ENCODE measurements at regions of chr3 and their contacts with region 1.

Region 1: DNA sequence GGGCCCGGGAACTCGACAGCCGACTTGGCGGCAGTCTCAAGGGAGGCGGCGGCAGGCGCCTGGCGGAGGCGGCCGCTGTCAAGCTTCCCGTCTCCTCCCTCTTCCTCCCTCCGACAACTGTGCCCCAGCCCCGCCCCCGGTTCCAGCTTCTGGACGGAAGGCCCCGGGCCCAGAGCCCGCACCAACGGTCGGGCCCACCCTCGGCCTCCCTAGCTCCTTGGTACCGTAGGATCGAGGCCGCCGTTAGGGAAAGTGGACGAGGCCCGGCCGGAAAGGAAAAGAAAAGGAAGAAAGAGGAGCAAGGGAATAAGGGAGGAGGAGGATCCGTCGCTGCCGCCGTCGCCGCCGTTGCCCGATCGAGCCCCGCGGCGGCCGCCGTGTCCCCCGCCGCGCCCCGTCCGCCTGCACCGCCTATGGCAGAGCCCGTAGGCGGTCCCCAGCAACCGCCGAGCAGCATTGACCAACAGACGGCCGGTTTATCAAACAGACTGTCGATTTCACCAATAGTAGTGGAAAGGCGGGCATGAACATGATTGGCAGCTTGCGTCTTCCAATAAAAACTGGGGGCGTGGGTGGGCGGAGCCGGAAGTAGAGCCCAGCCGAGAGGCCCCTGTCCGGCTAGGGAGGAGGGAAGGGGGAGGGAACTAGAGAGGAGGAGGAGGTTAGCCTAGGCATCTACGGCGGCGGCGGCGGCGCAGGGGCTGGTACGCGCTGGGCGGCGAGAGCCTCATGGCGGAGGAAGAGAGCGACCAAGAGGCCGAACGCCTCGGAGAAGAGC is at the starts of genes CGGBP1 and ZNF654:
- DNase-seq: peak; percentile 100
- H3K4me3 Mint-ChIP-seq: peak within 1 kb of the TSS; percentile 100
- H3K27ac Mint-ChIP-seq: peak within 1 kb of the TSS; percentile 97
- H3K4me1 Mint-ChIP-seq: peaks cover 49% of the 10 kb centered on the region
- H3K27me3 Mint-ChIP-seq: no peaks in the 10 kb centered on the region
- total RNA-seq, gene CGGBP1: 85.9 and 87.2 TPM in 2 replicates
- total RNA-seq, gene ZNF654: 18.1 and 18.7 TPM in 2 replicates

Region 2: GRCh38 chr3:87227104-87227834 is 831.5 kb before region 1 on chr3 and contains the start of gene CHMP2B:
- intact Hi-C with region 1: loop called (anchors 2 kb)
- DNase-seq: peak; percentile 97
- H3K4me3 Mint-ChIP-seq: peak within 1 kb of the TSS; percentile 100
- H3K27ac Mint-ChIP-seq: peak within 1 kb of the TSS; percentile 98
- H3K4me1 Mint-ChIP-seq: peaks cover 33% of the 10 kb centered on the region
- H3K27me3 Mint-ChIP-seq: peaks cover 25% of the 10 kb centered on the region
- total RNA-seq, gene CHMP2B: 25.3 and 27.2 TPM in 2 replicates

Region 3: DNA sequence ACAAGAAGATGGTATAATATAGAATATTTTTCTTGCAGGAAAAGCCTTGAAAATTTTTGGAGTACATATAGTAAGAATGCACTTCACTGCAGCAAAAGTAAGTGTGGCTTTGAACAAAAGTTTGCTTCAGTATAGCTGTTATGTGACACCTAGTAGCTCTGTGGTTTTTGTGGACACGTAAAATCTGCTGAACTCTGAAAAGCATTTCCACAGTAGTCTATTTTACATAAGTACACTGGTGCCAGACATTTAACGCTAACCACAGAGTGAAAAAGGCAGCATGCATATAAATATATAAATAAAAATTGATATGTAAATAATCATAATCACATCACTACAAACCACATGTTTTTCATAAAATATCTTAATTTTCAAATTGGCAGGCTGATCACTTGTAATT is 39.8 kb before region 1 on chr3:
- intact Hi-C with region 1: loop called (anchors 5 kb)
- DNase-seq: peak; percentile 80
- H3K4me3 Mint-ChIP-seq: no peak overlapping the region
- H3K27ac Mint-ChIP-seq: no peak overlapping the region
- H3K4me1 Mint-ChIP-seq: peaks cover 19% of the 10 kb centered on the region
- H3K27me3 Mint-ChIP-seq: peaks cover 7% of the 10 kb centered on the region

Region 4: DNA sequence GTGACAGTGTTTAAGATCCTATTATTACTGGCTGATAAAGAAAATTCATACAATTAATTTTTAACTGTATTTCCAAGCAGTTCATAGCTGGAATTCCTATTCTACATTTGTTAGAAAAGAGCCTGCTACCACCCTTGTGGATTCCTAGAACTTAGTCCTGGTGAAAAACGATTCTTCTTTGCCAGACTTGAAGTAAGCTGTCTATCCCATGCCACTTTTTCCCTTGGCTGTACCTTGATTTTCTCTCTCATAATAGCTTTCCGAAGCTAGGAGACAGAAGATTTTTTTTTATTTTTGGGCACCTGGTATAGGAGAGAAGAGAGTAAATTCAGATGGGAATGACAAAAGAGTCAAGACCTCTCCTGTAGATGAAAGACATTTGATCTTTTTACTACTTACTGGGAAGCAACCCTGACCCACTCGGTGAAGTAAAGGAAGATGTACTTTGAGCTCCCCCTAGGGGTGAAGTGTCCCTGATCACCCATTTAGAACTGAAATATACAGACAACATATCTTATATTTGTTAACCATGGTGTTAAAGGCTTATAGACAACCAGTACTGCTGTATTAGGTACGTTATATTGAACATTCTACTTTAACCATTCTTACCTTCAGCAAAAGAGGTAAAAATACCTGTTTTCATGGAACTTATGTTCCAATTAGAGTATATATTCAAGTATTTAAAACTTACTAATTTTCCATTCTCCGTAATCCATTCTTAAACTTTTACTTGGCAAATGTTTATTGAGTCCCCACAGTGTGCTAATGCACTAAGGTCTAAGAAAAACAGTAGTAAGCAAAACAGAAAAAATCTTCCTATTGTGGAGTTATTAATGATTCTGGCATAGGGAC is 54.8 kb after region 1 on chr3:
- intact Hi-C with region 1: loop called (anchors 1 kb)
- DNase-seq: peak; percentile 88
- H3K4me3 Mint-ChIP-seq: no peak overlapping the region
- H3K27ac Mint-ChIP-seq: no peak overlapping the region
- H3K4me1 Mint-ChIP-seq: peaks cover 19% of the 10 kb centered on the region
- H3K27me3 Mint-ChIP-seq: no peaks in the 10 kb centered on the region

Region 5: GRCh38 chr3:88180398-88180999 is 121.7 kb after region 1 on chr3:
- intact Hi-C with region 1: loop called (anchors 1 kb)
- DNase-seq: peak; percentile 80
- H3K4me3 Mint-ChIP-seq: no peak overlapping the region
- H3K27ac Mint-ChIP-seq: no peak overlapping the region
- H3K4me1 Mint-ChIP-seq: no peaks in the 10 kb centered on the region
- H3K27me3 Mint-ChIP-seq: peaks cover 15% of the 10 kb centered on the region

Measured in activated CD4-positive, alpha-beta T cell treated with anti-CD3 and anti-CD28 coated beads, Interleukin-2, amount 10 ng/mL, durations not matched to agents 24 days and 14 days (primary cell).